ENCODE measurements at regions of chr6 and their contacts with region 1.

Region 1: GRCh38 chr6:71288228-71289001 is at the start of gene OGFRL1:
- DNase-seq: peak; percentile 80
- ATAC-seq: peak; percentile 81
- H3K4me3 Mint-ChIP-seq: peak within 1 kb of the TSS; percentile 85
- H3K27ac Mint-ChIP-seq: peak within 1 kb of the TSS; percentile 93
- H3K4me1 Mint-ChIP-seq: peaks cover 49% of the 10 kb centered on the region
- H3K27me3 Mint-ChIP-seq: no peaks in the 10 kb centered on the region
- CTCF ChIP-seq: no peak
- total RNA-seq, gene OGFRL1: 17.1 and 18.4 TPM in 2 replicates

Region 2: GRCh38 chr6:69796642-69797390 is 1491.6 kb before region 1 on chr6 and contains the start of gene LMBRD1:
- CTCF ChIA-PET with region 1: no interaction called
- POLR2A ChIA-PET with region 1: no interaction called
- intact Hi-C with region 1: loop called (anchors 1 kb)
- DNase-seq: peak; percentile 100
- ATAC-seq: peak; percentile 81
- H3K4me3 Mint-ChIP-seq: peak within 1 kb of the TSS; percentile 95
- H3K27ac Mint-ChIP-seq: peak within 1 kb of the TSS; percentile 97
- H3K4me1 Mint-ChIP-seq: peaks cover 47% of the 10 kb centered on the region
- H3K27me3 Mint-ChIP-seq: no peaks in the 10 kb centered on the region
- CTCF ChIP-seq: peak; percentile 53
- total RNA-seq, gene LMBRD1: 46.9 and 51.3 TPM in 2 replicates

Region 3: DNA sequence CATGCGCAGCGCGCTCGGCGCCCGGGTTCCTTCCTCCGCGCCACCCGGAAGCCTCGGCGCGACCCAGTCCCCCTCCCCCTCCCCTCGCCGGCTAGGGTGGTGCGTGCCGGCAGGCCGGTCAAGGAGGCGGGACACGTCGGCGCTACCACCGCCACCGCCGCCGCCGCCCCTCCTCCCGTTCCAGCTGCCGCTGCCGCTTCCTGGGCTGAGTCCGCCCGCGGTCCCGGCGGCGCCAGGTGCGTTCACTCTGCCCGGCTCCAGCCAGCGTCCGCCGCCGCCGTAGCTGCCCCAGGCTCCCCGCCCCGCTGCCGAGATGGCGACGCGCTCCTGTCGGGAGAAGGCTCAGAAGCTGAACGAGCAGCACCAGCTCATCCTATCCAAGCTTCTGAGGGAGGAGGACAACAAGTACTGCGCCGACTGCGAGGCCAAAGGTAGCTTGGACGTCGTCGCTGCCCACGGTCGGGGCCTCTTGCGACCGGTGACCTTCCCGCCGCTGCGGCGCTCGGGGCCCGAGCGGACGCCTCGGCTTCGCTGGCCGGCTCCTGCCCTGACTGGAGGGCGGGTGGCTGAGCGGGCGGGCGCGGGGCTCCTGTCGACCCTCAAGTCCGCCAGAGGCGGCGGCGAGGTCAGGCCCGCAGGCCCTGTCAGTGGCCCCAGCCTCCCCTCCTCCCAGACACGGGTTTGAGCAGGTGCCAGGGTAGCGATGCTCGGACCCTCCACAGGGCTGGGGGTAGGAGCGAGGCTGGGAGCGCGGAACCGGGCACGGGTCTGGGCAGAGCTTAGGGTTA is 620.5 kb before region 1 on chr6 and contains the start of gene SMAP1:
- CTCF ChIA-PET with region 1: no interaction called
- POLR2A ChIA-PET with region 1: interaction called, 5 read pairs
- intact Hi-C with region 1: loop called (anchors 1 kb)
- DNase-seq: peak; percentile 94
- ATAC-seq: peak; percentile 96
- H3K4me3 Mint-ChIP-seq: peak within 1 kb of the TSS; percentile 85
- H3K27ac Mint-ChIP-seq: peak within 1 kb of the TSS; percentile 92
- H3K4me1 Mint-ChIP-seq: peaks cover 41% of the 10 kb centered on the region
- H3K27me3 Mint-ChIP-seq: no peaks in the 10 kb centered on the region
- CTCF ChIP-seq: no peak
- total RNA-seq, gene SMAP1: 20.7 and 21.6 TPM in 2 replicates

Region 4: GRCh38 chr6:71228461-71229041 is 59.9 kb before region 1 on chr6:
- CTCF ChIA-PET with region 1: no interaction called
- POLR2A ChIA-PET with region 1: interaction called, 3 read pairs
- intact Hi-C with region 1: loop called (anchors 5 kb)
- DNase-seq: no peak
- ATAC-seq: no peak
- H3K4me3 Mint-ChIP-seq: no peak overlapping the region
- H3K27ac Mint-ChIP-seq: no peak overlapping the region
- H3K4me1 Mint-ChIP-seq: peaks cover 36% of the 10 kb centered on the region
- H3K27me3 Mint-ChIP-seq: no peaks in the 10 kb centered on the region
- CTCF ChIP-seq: no peak

Region 5: DNA sequence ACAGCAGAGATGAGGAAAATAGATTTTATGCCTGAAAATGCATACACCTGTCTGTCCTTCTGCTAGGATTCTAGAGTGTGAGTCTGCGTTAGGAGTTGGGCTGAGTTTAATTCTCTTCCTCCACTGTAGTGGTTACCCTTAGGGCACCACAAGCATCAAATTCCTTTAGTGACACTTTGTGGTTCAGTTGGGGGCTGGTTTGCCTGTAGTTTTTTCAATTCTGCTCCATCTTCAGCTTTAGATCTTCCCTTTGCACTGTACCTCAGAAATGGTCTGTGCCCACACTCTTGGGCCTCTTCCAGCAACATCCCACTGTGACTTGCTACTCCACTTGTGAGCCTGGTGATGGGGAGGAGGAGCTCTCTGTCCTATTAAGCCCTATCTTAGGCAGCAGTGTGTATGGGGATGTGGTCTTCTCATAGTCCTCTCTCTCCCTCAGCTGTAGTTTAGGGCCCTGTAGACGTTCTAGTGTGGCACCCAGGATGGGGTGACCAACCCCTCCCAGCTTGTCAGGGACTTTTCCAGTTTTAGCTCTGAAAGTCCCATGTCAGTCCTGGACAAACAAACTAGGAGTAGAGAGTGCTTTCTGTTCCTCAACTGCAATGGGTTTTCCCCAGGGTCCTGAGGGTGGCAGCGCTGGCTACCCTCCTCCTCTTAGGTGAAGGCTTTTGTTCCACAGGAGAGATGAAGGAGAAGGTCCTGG is 19.5 kb before region 1 on chr6:
- CTCF ChIA-PET with region 1: interaction called, 11 read pairs
- POLR2A ChIA-PET with region 1: interaction called, 22 read pairs
- intact Hi-C with region 1: loop called (anchors 2 kb)
- DNase-seq: no peak
- ATAC-seq: peak; percentile 70
- H3K4me3 Mint-ChIP-seq: peak overlapping the region; percentile 50
- H3K27ac Mint-ChIP-seq: peak overlapping the region; percentile 68
- H3K4me1 Mint-ChIP-seq: peaks cover 18% of the 10 kb centered on the region
- H3K27me3 Mint-ChIP-seq: no peaks in the 10 kb centered on the region
- CTCF ChIP-seq: no peak

Region 6: DNA sequence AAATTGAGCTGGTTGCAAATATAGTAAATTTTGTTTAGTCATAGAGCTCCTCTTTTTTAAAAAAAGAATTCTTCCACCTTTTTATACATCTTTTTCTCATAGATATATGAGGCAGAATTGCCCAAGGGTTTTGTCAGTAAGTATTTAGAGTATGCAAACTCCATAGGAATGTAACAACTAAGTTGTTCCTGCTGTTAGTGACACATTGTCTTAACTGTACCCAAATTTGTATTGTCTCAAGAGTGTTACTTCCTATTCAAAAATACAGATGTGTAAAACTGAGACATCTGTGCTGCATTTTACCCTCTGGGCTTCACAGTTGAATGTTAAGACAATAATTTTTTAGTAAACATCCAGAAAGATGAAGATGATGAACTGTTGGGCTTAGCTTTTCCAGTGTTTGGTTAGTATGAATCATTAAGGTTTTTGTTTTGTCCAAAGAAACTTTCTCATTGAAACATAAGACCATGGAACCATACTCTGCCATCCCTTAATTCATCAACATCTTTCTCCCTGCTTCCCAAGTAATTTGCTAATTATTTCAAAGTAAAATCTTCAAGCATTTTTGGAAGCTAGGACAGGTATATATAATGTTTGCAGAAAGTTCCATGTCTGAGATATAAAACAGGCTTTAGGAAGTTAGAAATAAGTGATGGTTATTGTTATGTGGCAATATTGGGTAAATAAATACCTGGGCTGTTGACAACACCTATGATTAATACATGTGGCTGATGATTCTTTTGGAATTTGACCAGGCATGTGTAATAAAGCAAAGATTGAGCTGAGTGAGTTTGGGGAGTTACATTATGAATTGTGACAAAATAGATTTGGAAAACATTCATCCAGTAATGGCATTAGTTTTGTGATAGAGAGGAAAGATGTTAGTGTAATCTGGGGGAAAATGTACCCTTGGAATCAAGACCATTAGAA is 11.4 kb after region 1 on chr6:
- CTCF ChIA-PET with region 1: no interaction called
- POLR2A ChIA-PET with region 1: interaction called, 21 read pairs
- intact Hi-C with region 1: no loop called
- DNase-seq: no peak
- ATAC-seq: no peak
- H3K4me3 Mint-ChIP-seq: no peak overlapping the region
- H3K27ac Mint-ChIP-seq: no peak overlapping the region
- H3K4me1 Mint-ChIP-seq: no peaks in the 10 kb centered on the region
- H3K27me3 Mint-ChIP-seq: no peaks in the 10 kb centered on the region
- CTCF ChIP-seq: no peak

Region 7: GRCh38 chr6:71321314-71321713 is 32.9 kb after region 1 on chr6:
- CTCF ChIA-PET with region 1: no interaction called
- POLR2A ChIA-PET with region 1: no interaction called
- intact Hi-C with region 1: no loop called
- DNase-seq: no peak
- ATAC-seq: no peak
- H3K4me3 Mint-ChIP-seq: no peak overlapping the region
- H3K27ac Mint-ChIP-seq: no peak overlapping the region
- H3K4me1 Mint-ChIP-seq: no peaks in the 10 kb centered on the region
- H3K27me3 Mint-ChIP-seq: peaks cover 9% of the 10 kb centered on the region
- CTCF ChIP-seq: no peak